Activated CD8-positive, alpha-beta memory T cell treated with anti-CD3 and anti-CD28 coated beads, Interleukin-2, amount 10 ng/mL, durations not matched to agents 7 days and 5 days (primary cell): ENCODE measurements at regions of chr9 and their contacts with region 1.

Region 1: GRCh38 chr9:34072868-34073590 is 24.3 kb upstream of the UBAP2 start:
- DNase-seq: no peak
- ATAC-seq: no peak
- H3K4me3 Mint-ChIP-seq: no peak overlapping the region
- H3K27ac Mint-ChIP-seq: no peak overlapping the region
- H3K4me1 Mint-ChIP-seq: peaks cover 9% of the 10 kb centered on the region
- H3K27me3 Mint-ChIP-seq: no peaks in the 10 kb centered on the region

Region 2: DNA sequence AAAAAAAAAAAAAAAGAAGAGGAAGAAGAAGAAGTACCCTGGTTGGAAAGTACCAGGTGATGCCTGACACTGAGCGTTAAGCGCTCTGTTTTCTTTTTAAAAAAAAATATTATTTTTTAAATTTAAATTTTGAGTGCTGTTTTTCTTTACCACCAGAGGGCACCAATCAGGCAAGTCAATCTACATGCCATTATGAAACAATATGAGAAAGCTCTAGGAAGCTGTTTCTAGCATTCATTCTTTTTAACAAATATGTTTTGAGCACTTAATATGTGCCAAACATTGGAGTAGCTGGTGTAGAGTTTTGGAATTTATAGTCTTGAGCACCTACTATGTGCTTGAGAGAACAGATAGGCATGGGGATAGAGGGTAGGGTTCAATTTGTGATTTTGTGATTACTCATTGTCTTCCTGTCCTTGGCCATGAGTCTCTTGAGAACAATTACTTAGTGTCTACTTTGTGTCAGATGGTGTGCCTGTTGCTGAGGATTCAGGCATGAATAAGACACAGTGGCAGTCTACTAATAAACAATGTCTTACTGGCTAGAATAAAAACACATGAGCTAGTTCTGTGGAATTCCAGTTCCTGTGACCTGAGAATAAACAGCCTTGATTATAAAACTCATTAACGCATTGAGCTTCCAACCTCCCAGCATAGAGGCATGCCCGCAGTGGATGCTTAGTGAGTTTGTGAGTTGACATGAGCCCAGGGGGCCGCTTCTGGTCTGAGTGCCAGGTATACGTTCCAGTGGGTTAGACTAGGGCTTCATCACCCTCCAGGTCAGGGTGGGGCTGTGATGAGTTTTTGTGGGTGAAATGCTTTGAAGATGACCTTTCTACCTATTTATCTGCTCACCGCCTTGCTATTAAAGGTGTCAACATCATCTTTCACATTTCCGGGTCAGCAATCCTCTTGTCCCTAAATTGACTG is 259.1 kb before region 1 on chr9:
- CTCF ChIA-PET with region 1: interaction called, 17 read pairs
- DNase-seq: peak; percentile 40
- ATAC-seq: no peak
- H3K4me3 Mint-ChIP-seq: no peak overlapping the region
- H3K27ac Mint-ChIP-seq: peak overlapping the region; percentile 81
- H3K4me1 Mint-ChIP-seq: peaks cover 36% of the 10 kb centered on the region
- H3K27me3 Mint-ChIP-seq: peaks cover 16% of the 10 kb centered on the region

Region 3: DNA sequence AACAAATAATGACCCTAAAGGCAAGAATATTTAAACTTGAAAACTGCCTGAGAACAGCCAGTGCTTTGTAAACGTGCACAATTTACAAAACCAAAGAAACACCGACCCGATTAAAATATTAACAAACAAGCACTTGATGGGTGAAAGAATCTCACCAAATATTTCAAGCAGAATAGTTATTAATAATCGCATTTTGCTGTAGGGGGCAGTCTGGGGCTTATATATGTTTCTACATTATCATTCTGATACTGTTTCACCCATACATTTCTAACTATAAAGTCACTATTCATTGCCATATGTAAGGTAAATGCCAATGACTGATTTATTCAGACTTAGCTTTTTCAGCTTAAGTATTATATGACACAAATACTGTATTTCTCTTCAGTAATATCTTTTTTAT is 62.0 kb before region 1 on chr9:
- CTCF ChIA-PET with region 1: interaction called, 18 read pairs
- DNase-seq: no peak
- ATAC-seq: no peak
- H3K4me3 Mint-ChIP-seq: no peak overlapping the region
- H3K27ac Mint-ChIP-seq: no peak overlapping the region
- H3K4me1 Mint-ChIP-seq: peaks cover 3% of the 10 kb centered on the region
- H3K27me3 Mint-ChIP-seq: no peaks in the 10 kb centered on the region

Region 4: GRCh38 chr9:34089311-34089710 is 16.3 kb after region 1 on chr9:
- CTCF ChIA-PET with region 1: interaction called, 10 read pairs
- DNase-seq: no peak
- ATAC-seq: no peak
- H3K4me3 Mint-ChIP-seq: no peak overlapping the region
- H3K27ac Mint-ChIP-seq: no peak overlapping the region
- H3K4me1 Mint-ChIP-seq: peaks cover 18% of the 10 kb centered on the region
- H3K27me3 Mint-ChIP-seq: no peaks in the 10 kb centered on the region

Region 5: GRCh38 chr9:34376596-34377403 is 303.8 kb after region 1 on chr9 and contains the start of gene MYORG:
- CTCF ChIA-PET with region 1: interaction called, 10 read pairs
- DNase-seq: peak; percentile 99
- ATAC-seq: peak; percentile 82
- H3K4me3 Mint-ChIP-seq: peak within 1 kb of the TSS; percentile 83
- H3K27ac Mint-ChIP-seq: peak within 1 kb of the TSS; percentile 82
- H3K4me1 Mint-ChIP-seq: peaks cover 40% of the 10 kb centered on the region
- H3K27me3 Mint-ChIP-seq: peaks cover 4% of the 10 kb centered on the region
- total RNA-seq, gene MYORG: 3.7 to 4.2 TPM